ENCODE measurements at regions of chr6 and their contacts with region 1.

Region 1: GRCh38 chr6:43427406-43428111 is at the start of gene ABCC10:
- DNase-seq: peak; percentile 97
- ATAC-seq: peak; percentile 93
- H3K4me3 ChIP-seq: peak within 1 kb of the TSS; percentile 59 to 93 (median 83)
- H3K4me3 Mint-ChIP-seq: peak within 1 kb of the TSS; percentile 96
- H3K27ac ChIP-seq: peak within 1 kb of the TSS; percentile 72 to 88
- H3K27ac Mint-ChIP-seq: peak within 1 kb of the TSS; percentile 96
- H3K4me1 ChIP-seq: peaks cover 16 to 19% of the 10 kb centered on the region in 2 donors
- H3K4me1 Mint-ChIP-seq: peaks cover 24% of the 10 kb centered on the region
- H3K27me3 ChIP-seq: no peaks in the 10 kb centered on the region
- H3K27me3 Mint-ChIP-seq: no peaks in the 10 kb centered on the region
- CTCF ChIP-seq: peak; percentile 21
- total RNA-seq, gene ABCC10: 71.5 and 84.2 TPM in 2 replicates

Region 2: DNA sequence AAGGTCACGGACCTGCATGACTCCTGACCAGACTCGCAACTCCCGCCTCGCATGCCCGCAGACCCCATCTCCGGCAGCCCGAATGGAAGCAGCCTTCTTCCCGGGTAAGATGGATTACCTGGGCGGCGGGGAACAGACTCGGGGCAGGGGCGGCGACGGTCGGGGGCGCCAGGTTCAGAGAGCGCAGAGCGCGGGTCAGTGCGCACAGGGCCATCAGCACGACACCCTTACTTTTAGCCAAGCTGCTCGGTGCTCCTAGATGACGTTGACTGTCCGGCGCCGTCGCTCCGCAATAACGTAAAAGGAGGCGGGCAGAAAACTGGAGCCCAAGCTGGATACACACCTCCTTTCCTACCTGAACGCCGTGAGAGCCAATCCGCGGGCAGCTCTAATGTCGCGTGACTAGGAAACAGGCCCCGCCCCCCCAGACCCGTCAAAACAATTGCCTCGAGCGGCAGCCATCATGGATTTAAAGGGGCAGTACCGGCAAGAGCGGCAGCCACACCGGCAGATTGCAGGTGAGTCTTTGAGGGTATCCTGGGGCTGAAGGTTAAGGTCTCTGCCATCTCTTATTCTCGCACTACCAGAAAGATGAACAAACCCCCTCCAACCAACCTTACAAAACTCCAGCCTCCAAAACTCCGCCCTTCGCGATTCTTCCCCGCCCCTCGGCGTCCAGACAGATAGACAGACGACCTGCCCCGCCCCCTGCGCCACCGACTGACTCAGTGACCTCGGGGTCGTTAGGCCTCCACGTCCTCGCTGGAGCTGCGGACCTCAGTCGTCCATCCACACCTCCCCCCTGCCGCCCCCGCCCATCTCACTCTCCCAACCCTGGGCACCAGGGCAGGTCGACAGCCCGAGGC is 368.2 kb before region 1 on chr6 and contains the starts of genes KLC4 and MRPL2:
- CTCF ChIA-PET with region 1: no interaction called
- POLR2A ChIA-PET with region 1: no interaction called
- intact Hi-C with region 1: loop called (anchors 1 kb)
- DNase-seq: peak; percentile 98
- ATAC-seq: peak; percentile 96
- H3K4me3 ChIP-seq: peak within 1 kb of the TSS; percentile 76 to 96 (median 89)
- H3K4me3 Mint-ChIP-seq: peak within 1 kb of the TSS; percentile 99
- H3K27ac ChIP-seq: peak within 1 kb of the TSS; percentile 76 to 86
- H3K27ac Mint-ChIP-seq: peak within 1 kb of the TSS; percentile 100
- H3K4me1 ChIP-seq: peaks cover 17 to 23% of the 10 kb centered on the region in 2 donors
- H3K4me1 Mint-ChIP-seq: peaks cover 38% of the 10 kb centered on the region
- H3K27me3 ChIP-seq: no peaks in the 10 kb centered on the region
- H3K27me3 Mint-ChIP-seq: no peaks in the 10 kb centered on the region
- CTCF ChIP-seq: no peak
- total RNA-seq, gene KLC4: 52.7 and 61.9 TPM in 2 replicates
- total RNA-seq, gene MRPL2: 43.8 and 45.6 TPM in 2 replicates

Region 3: GRCh38 chr6:43318011-43318410 is 109.5 kb before region 1 on chr6:
- CTCF ChIA-PET with region 1: no interaction called
- POLR2A ChIA-PET with region 1: interaction called, 11 read pairs
- intact Hi-C with region 1: no loop called
- DNase-seq: peak; percentile 71
- ATAC-seq: peak; percentile 51
- H3K4me3 ChIP-seq: peak overlapping the region in 1 of 5 experiments; percentile 8
- H3K4me3 Mint-ChIP-seq: peak overlapping the region; percentile 79
- H3K27ac ChIP-seq: peak overlapping the region; percentile 76 to 83
- H3K27ac Mint-ChIP-seq: peak overlapping the region; percentile 95
- H3K4me1 ChIP-seq: peaks cover 60 to 69% of the 10 kb centered on the region in 2 donors
- H3K4me1 Mint-ChIP-seq: peaks cover 81% of the 10 kb centered on the region
- H3K27me3 ChIP-seq: no peaks in the 10 kb centered on the region
- H3K27me3 Mint-ChIP-seq: no peaks in the 10 kb centered on the region
- CTCF ChIP-seq: no peak

Region 4: GRCh38 chr6:43383021-43383667 is 44.4 kb before region 1 on chr6:
- CTCF ChIA-PET with region 1: interaction called, 5 read pairs
- POLR2A ChIA-PET with region 1: interaction called, 6 read pairs
- intact Hi-C with region 1: loop called (anchors 1 kb)
- DNase-seq: no peak
- ATAC-seq: no peak
- H3K4me3 ChIP-seq: peak overlapping the region in 2 of 5 experiments; percentile 18 to 42
- H3K4me3 Mint-ChIP-seq: peak overlapping the region; percentile 85
- H3K27ac ChIP-seq: peak overlapping the region; percentile 91 to 94
- H3K27ac Mint-ChIP-seq: peak overlapping the region; percentile 98
- H3K4me1 ChIP-seq: peaks cover 68 to 73% of the 10 kb centered on the region in 2 donors
- H3K4me1 Mint-ChIP-seq: peaks cover 67% of the 10 kb centered on the region
- H3K27me3 ChIP-seq: peaks cover 0 to 4% (median 2%) of the 10 kb centered on the region in 4 experiments
- H3K27me3 Mint-ChIP-seq: peaks cover 12% of the 10 kb centered on the region
- CTCF ChIP-seq: no peak

Region 5: GRCh38 chr6:43477235-43478007 is 49.9 kb after region 1 on chr6 and contains the start of gene TJAP1:
- CTCF ChIA-PET with region 1: interaction called, 3 read pairs
- POLR2A ChIA-PET with region 1: no interaction called
- intact Hi-C with region 1: loop called (anchors 1 kb)
- DNase-seq: peak; percentile 94
- ATAC-seq: peak; percentile 100
- H3K4me3 ChIP-seq: peak within 1 kb of the TSS; percentile 51 to 81 (median 71)
- H3K4me3 Mint-ChIP-seq: peak within 1 kb of the TSS; percentile 96
- H3K27ac ChIP-seq: peak within 1 kb of the TSS; percentile 79 to 97
- H3K27ac Mint-ChIP-seq: peak within 1 kb of the TSS; percentile 98
- H3K4me1 ChIP-seq: peaks cover 14 to 22% of the 10 kb centered on the region in 2 donors
- H3K4me1 Mint-ChIP-seq: peaks cover 41% of the 10 kb centered on the region
- H3K27me3 ChIP-seq: no peaks in the 10 kb centered on the region
- H3K27me3 Mint-ChIP-seq: no peaks in the 10 kb centered on the region
- CTCF ChIP-seq: no peak
- total RNA-seq, gene TJAP1: 57.1 and 59.1 TPM in 2 replicates

Measured in B cell (primary cell).